PC-3 (cell line): ENCODE measurements at regions of chr11 and their contacts with region 1.

Region 1: GRCh38 chr11:72940417-72940816 is 126.2 kb downstream of the ATG16L2 start:
- DNase-seq: no peak
- ATAC-seq: no peak
- H3K4me3 ChIP-seq: no peak overlapping the region
- H3K27ac ChIP-seq: no peak overlapping the region
- H3K4me1 ChIP-seq: no peaks in the 10 kb centered on the region
- H3K27me3 ChIP-seq: no peaks in the 10 kb centered on the region
- CTCF ChIP-seq: no peak

Region 2: GRCh38 chr11:72864702-72865655 is 75.4 kb before region 1 on chr11:
- CTCF ChIA-PET with region 1: no interaction called
- POLR2A ChIA-PET with region 1: no interaction called
- intact Hi-C with region 1: no loop called
- DNase-seq: peak; percentile 17
- ATAC-seq: no peak; the same call in 1 of the 2 replicates
- H3K4me3 ChIP-seq: no peak overlapping the region
- H3K27ac ChIP-seq: no peak overlapping the region
- H3K4me1 ChIP-seq: no peaks in the 10 kb centered on the region
- H3K27me3 ChIP-seq: no peaks in the 10 kb centered on the region
- CTCF ChIP-seq: no peak

Region 3: DNA sequence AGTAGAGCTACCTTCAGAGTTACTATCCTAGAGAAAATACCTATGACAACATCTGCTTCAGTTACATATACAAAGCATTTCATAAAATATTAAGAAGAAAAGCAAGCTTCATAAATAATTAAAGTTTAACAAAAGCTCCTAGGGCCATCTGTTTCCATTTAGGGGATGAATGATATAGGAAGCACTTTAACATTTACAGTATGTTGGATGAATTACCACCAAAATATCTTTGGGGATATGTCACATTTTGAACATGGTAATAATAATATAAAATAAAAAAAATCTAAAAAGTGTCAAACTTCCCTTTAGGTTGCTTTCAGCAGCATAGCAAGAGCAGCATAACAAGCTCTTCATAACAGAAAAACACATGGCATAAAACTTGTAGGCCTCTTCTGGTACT is 21.6 kb before region 1 on chr11:
- CTCF ChIA-PET with region 1: no interaction called
- POLR2A ChIA-PET with region 1: no interaction called
- intact Hi-C with region 1: no loop called
- DNase-seq: no peak
- ATAC-seq: no peak
- H3K4me3 ChIP-seq: no peak overlapping the region
- H3K27ac ChIP-seq: no peak overlapping the region
- H3K4me1 ChIP-seq: no peaks in the 10 kb centered on the region
- H3K27me3 ChIP-seq: no peaks in the 10 kb centered on the region
- CTCF ChIP-seq: no peak

Region 4: GRCh38 chr11:73047773-73048371 is 107.5 kb after region 1 on chr11:
- CTCF ChIA-PET with region 1: no interaction called
- POLR2A ChIA-PET with region 1: interaction called, 13 read pairs
- intact Hi-C with region 1: no loop called
- DNase-seq: peak; percentile 26
- ATAC-seq: peak; percentile 61
- H3K4me3 ChIP-seq: no peak overlapping the region
- H3K27ac ChIP-seq: no peak overlapping the region
- H3K4me1 ChIP-seq: peaks cover 8% of the 10 kb centered on the region
- H3K27me3 ChIP-seq: no peaks in the 10 kb centered on the region
- CTCF ChIP-seq: no peak